ENCODE measurements at regions of chr12 and their contacts with region 1.

Region 1: GRCh38 chr12:107372229-107372658 is 278.9 kb upstream of the CRY1 start:
- DNase-seq: peak; percentile 45
- H3K4me3 Mint-ChIP-seq: peak overlapping the region; percentile 31
- H3K27ac Mint-ChIP-seq: peak overlapping the region; percentile 76
- H3K4me1 Mint-ChIP-seq: peaks cover 75% of the 10 kb centered on the region
- H3K27me3 Mint-ChIP-seq: no peaks in the 10 kb centered on the region

Region 2: GRCh38 chr12:107356266-107356936 is 15.8 kb before region 1 on chr12:
- CTCF ChIA-PET with region 1: interaction called, 5 read pairs
- POLR2A ChIA-PET with region 1: interaction called, 15 read pairs
- DNase-seq: no peak
- H3K4me3 Mint-ChIP-seq: no peak overlapping the region
- H3K27ac Mint-ChIP-seq: no peak overlapping the region
- H3K4me1 Mint-ChIP-seq: peaks cover 52% of the 10 kb centered on the region
- H3K27me3 Mint-ChIP-seq: no peaks in the 10 kb centered on the region